ENCODE measurements at regions of chr10 and their contacts with region 1.

Region 1: DNA sequence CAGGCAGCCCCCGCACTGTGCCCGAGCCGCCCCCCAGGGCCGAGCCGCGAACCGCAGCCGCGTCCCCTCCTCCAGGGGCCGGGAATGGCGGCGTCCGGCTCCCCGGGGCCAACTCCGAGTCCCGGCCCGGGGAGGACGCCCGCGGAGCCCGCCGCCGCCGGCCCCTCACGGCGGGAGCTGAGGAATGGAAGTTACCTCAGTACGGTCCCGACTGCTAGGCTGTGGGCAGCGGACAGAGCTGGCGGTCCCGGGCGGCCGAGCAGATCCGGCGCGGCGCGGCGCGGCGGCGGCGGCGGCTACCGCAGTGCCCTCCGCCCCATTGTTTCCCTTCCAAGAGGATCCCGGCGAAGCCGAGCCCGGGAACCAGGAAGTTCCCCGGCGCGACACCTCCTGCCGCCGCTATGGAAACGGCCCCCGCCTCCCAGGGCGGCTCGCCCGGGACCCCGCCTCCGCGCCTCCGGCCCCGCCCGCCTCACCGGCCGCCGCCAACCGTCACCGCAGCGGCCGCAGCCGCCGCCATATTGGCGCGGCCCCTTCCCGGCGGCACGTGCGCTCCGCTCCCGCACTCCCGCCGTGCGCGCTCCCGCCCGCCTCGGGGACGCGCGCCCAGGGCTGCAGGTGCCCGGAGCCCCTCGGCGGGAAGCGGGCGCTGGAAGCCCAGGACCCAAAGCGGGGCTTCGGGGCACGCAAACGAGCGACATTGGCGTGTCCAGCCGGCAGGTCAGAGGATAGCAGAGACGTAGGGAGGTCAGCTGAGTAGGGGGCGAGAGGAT is at the start of gene USP6NL:
- DNase-seq: peak; percentile 94
- H3K4me3 ChIP-seq: peak within 1 kb of the TSS; percentile 68 to 96 (median 92)
- H3K27ac ChIP-seq: peak within 1 kb of the TSS; percentile 78 to 95 (median 88)
- H3K4me1 ChIP-seq: peaks cover 9 to 32% (median 28%) of the 10 kb centered on the region in 4 donors
- H3K27me3 ChIP-seq: no peaks in the 10 kb centered on the region
- CTCF ChIP-seq: no peak
- EP300 ChIP-seq: no peak
- POLR2A ChIP-seq: peak; percentile 22
- total RNA-seq, gene USP6NL: 10.4 to 14.9 (median 13.2) TPM

Region 2: GRCh38 chr10:11525503-11525902 is 85.9 kb before region 1 on chr10:
- intact Hi-C with region 1: loop called (anchors 10 kb)
- DNase-seq: no peak
- H3K4me3 ChIP-seq: no peak overlapping the region
- H3K27ac ChIP-seq: peak overlapping the region in 3 of 4 donors; percentile 7 to 33 (median 10)
- H3K4me1 ChIP-seq: peaks cover 14 to 25% (median 20%) of the 10 kb centered on the region in 4 donors
- H3K27me3 ChIP-seq: no peaks in the 10 kb centered on the region
- CTCF ChIP-seq: no peak
- EP300 ChIP-seq: no peak
- POLR2A ChIP-seq: no peak

Region 3: GRCh38 chr10:11757821-11758463 is 146.5 kb after region 1 on chr10:
- intact Hi-C with region 1: loop called (anchors 10 kb)
- DNase-seq: peak; percentile 95
- H3K4me3 ChIP-seq: no peak overlapping the region
- H3K27ac ChIP-seq: peak overlapping the region; percentile 39 to 68 (median 42)
- H3K4me1 ChIP-seq: peaks cover 21 to 51% (median 24%) of the 10 kb centered on the region in 4 donors
- H3K27me3 ChIP-seq: no peaks in the 10 kb centered on the region
- CTCF ChIP-seq: peak; percentile 89 to 96 (median 89)
- EP300 ChIP-seq: no peak
- POLR2A ChIP-seq: no peak

Region 4: DNA sequence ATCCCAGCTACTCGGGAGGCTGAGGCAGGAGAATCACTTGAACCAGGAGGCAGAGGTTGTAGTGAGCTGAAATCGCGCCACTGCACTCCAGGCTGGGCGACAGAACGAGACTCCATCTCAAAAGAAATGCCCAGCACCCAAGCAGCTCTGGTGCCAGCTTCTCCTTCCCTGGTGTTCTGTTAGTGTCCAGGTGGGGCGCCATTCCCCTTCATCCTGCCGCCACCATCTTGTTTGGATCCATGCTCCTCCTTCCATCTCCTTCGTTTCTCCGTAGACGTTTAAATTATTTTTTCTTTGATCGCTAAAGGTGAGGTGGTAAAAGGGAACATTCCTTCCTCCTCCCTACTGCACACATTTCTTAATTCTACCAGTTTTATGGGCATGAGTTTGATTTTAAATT is 242.0 kb after region 1 on chr10:
- intact Hi-C with region 1: no loop called
- DNase-seq: no peak
- H3K4me3 ChIP-seq: no peak overlapping the region
- H3K27ac ChIP-seq: no peak overlapping the region
- H3K4me1 ChIP-seq: no peaks in the 10 kb centered on the region
- H3K27me3 ChIP-seq: no peaks in the 10 kb centered on the region
- CTCF ChIP-seq: no peak
- EP300 ChIP-seq: no peak
- POLR2A ChIP-seq: no peak